ENCODE measurements at regions of chr10 and their contacts with region 1.

Region 1: GRCh38 chr10:71638064-71638821 is 81.3 kb downstream of the C10orf105 start:
- DNase-seq: peak in 2 of 3 donors; percentile 33 to 34
- H3K4me3 ChIP-seq: no peak overlapping the region
- H3K27ac ChIP-seq: peak overlapping the region in 1 of 2 experiments; percentile 60
- H3K4me1 ChIP-seq: peaks cover 2 to 24% (median 19%) of the 10 kb centered on the region in 4 experiments
- H3K27me3 ChIP-seq: no peaks in the 10 kb centered on the region

Region 2: DNA sequence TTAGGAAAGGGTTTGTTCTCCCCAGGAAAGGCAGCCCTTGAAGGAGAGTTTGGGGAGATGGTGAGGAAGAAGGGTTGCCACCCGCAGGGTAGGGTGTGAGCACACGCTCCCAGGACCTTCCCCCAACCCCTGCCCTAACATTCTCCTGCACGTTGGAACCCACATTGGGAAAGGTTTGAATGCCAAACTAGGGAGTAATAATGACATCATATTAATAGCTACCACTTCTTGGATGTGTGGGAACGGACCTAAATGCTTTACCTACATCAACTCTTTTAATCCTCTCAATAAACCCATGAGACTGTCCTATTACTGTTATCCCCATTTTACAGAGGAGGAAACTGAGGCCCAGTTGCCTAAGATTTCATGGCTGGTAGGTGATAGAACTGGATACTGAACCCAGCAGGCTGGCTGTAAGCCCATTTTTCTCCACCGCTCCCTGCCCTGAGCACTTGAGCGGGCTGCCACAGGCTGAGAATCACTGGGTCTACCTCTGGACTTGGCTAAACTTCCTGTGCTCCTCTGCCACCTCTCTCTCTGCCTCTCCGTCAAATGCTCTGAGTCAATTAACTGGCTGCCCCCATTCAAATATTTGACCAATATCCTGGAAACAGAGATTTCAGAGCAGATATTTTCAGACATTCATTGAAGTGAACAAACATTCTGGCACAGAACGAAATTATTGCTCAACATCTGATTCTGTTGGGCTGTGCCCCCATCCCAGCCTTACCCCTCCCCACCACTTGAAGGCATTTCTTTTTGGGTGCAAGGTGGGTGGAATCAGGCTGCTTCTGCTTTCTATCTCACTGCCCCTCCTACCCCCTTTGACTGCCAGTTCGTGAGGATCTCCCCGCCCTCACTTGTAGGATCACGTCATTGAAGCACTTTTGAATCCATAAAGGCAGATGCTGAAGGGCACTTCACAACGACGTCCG is 48.4 kb before region 1 on chr10:
- CTCF ChIA-PET with region 1: no interaction called
- POLR2A ChIA-PET with region 1: no interaction called
- DNase-seq: peak in 2 of 3 donors; percentile 43 to 56
- H3K4me3 ChIP-seq: no peak overlapping the region
- H3K27ac ChIP-seq: no peak overlapping the region
- H3K4me1 ChIP-seq: peaks cover 0 to 5% (median 0%) of the 10 kb centered on the region in 4 experiments
- H3K27me3 ChIP-seq: no peaks in the 10 kb centered on the region

Region 3: GRCh38 chr10:71623098-71623985 is 14.9 kb before region 1 on chr10:
- CTCF ChIA-PET with region 1: interaction called, 15 read pairs
- POLR2A ChIA-PET with region 1: no interaction called
- DNase-seq: peak; percentile 26 to 49 (median 42)
- H3K4me3 ChIP-seq: no peak overlapping the region
- H3K27ac ChIP-seq: no peak overlapping the region
- H3K4me1 ChIP-seq: peaks cover 0 to 11% (median 7%) of the 10 kb centered on the region in 4 experiments
- H3K27me3 ChIP-seq: no peaks in the 10 kb centered on the region